Panc1 (cell line): ENCODE measurements at regions of chr15 and their contacts with region 1.

Region 1: GRCh38 chr15:65862682-65863081 is 6.6 kb upstream of the RAB11A start:
- DNase-seq: no peak
- ATAC-seq: peak; percentile 95
- H3K4me3 ChIP-seq: no peak overlapping the region
- H3K27ac ChIP-seq: no peak overlapping the region
- H3K4me1 ChIP-seq: no peaks in the 10 kb centered on the region
- H3K27me3 ChIP-seq: no peaks in the 10 kb centered on the region
- CTCF ChIP-seq: peak; percentile 72

Region 2: DNA sequence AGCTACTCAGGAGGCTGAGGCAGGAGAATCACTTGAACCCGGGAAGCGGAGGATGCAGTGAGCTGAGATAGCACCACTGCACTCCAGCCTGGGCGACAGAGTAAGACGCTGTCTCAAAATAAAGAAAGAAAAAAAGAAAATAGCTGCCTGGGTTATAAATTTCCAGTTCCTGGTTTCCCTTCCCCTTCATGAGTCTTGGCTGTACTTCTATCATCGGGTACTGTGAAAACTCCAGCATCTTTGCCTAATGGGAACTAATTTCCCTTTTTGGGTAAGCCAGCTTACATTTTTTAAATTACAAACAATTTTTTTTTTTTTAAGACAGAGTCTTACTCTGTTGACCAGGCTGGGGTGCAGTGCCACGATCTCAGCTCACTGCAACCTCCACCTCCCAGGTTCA is 85.6 kb before region 1 on chr15:
- CTCF ChIA-PET with region 1: no interaction called
- POLR2A ChIA-PET with region 1: interaction called, 12 read pairs
- in situ Hi-C with region 1: no loop called
- intact Hi-C with region 1: no loop called
- DNase-seq: no peak
- ATAC-seq: no peak
- H3K4me3 ChIP-seq: no peak overlapping the region
- H3K27ac ChIP-seq: no peak overlapping the region
- H3K4me1 ChIP-seq: no peaks in the 10 kb centered on the region
- H3K27me3 ChIP-seq: no peaks in the 10 kb centered on the region
- CTCF ChIP-seq: no peak